ENCODE measurements at regions of chr5 and their contacts with region 1.

Region 1: GRCh38 chr5:32098291-32098690 is 75.8 kb downstream of the GOLPH3 start:
- DNase-seq: peak; percentile 96
- H3K4me3 ChIP-seq: peak overlapping the region in 1 of 3 experiments; percentile 43
- H3K27ac ChIP-seq: peak overlapping the region; percentile 96
- H3K4me1 ChIP-seq: peaks cover 45% of the 10 kb centered on the region
- H3K27me3 ChIP-seq: no peaks in the 10 kb centered on the region
- CTCF ChIP-seq: no peak
- POLR2A ChIP-seq: no peak

Region 2: GRCh38 chr5:31972558-31972957 is 125.7 kb before region 1 on chr5:
- CTCF ChIA-PET with region 1: no interaction called
- POLR2A ChIA-PET with region 1: no interaction called
- dilution Hi-C with region 1: no loop called
- intact Hi-C with region 1: no loop called
- DNase-seq: no peak
- H3K4me3 ChIP-seq: no peak overlapping the region
- H3K27ac ChIP-seq: no peak overlapping the region
- H3K4me1 ChIP-seq: no peaks in the 10 kb centered on the region
- H3K27me3 ChIP-seq: no peaks in the 10 kb centered on the region
- CTCF ChIP-seq: no peak
- POLR2A ChIP-seq: no peak

Region 3: GRCh38 chr5:32187675-32188074 is 89.4 kb after region 1 on chr5:
- CTCF ChIA-PET with region 1: no interaction called
- POLR2A ChIA-PET with region 1: no interaction called
- dilution Hi-C with region 1: no loop called
- intact Hi-C with region 1: no loop called
- DNase-seq: no peak
- H3K4me3 ChIP-seq: no peak overlapping the region
- H3K27ac ChIP-seq: no peak overlapping the region
- H3K4me1 ChIP-seq: no peaks in the 10 kb centered on the region
- H3K27me3 ChIP-seq: no peaks in the 10 kb centered on the region
- CTCF ChIP-seq: no peak
- POLR2A ChIP-seq: no peak

Region 4: DNA sequence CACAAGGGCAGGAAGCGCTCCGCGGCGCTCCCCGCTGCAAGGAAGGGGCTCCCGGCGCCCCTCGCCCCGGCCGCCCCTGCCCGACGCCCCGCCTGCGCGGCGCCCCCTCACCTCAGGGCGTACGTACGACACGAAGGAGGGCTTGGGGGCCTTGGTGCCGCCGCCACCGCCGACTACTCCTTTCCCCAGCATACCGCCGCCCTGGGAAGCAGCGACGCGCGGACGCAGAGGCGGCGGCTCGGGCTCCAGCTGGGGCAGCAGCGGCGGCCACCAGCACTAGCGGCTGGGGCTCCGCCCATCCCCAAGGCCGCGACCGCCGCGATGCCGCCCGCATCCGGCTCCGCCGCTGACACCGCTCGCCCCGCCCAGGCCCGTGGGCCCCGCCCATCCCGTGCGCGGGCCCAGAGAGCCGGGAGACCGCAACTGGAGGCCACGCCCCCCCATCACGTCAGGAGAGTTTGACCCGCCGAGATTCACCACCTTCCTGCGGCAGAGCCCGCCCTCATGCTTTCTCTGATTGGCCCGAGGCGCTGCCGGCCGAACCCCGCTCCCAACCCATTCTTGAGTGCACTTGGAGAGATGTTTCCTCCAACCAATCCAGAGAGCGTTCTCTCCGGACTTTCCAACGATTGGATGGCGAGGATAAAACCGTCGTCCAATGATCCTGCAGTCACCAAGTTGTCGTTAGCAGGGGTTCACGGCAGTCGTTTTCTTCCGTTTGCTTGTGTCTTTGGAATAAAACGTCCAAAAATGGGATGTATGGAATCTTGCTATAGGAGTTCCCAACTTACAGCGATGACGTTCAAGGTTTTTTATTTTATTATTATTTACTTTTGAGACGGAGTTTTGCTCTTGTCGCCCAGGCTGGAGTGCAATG is 214.6 kb after region 1 on chr5 and contains the start of gene MTMR12:
- CTCF ChIA-PET with region 1: no interaction called
- POLR2A ChIA-PET with region 1: no interaction called
- dilution Hi-C with region 1: no loop called
- intact Hi-C with region 1: loop called (anchors 1 kb)
- DNase-seq: peak; percentile 100
- H3K4me3 ChIP-seq: peak within 1 kb of the TSS; percentile 55 to 88 (median 80)
- H3K27ac ChIP-seq: peak within 1 kb of the TSS; percentile 92
- H3K4me1 ChIP-seq: peaks cover 7% of the 10 kb centered on the region
- H3K27me3 ChIP-seq: no peaks in the 10 kb centered on the region
- CTCF ChIP-seq: no peak
- POLR2A ChIP-seq: peak; percentile 60
- total RNA-seq, gene MTMR12: 35.4 and 38.6 TPM in 2 replicates

Measured in endothelial cell of umbilical vein (primary cell).